ENCODE measurements at regions of chr18 and their contacts with region 1.

Region 1: DNA sequence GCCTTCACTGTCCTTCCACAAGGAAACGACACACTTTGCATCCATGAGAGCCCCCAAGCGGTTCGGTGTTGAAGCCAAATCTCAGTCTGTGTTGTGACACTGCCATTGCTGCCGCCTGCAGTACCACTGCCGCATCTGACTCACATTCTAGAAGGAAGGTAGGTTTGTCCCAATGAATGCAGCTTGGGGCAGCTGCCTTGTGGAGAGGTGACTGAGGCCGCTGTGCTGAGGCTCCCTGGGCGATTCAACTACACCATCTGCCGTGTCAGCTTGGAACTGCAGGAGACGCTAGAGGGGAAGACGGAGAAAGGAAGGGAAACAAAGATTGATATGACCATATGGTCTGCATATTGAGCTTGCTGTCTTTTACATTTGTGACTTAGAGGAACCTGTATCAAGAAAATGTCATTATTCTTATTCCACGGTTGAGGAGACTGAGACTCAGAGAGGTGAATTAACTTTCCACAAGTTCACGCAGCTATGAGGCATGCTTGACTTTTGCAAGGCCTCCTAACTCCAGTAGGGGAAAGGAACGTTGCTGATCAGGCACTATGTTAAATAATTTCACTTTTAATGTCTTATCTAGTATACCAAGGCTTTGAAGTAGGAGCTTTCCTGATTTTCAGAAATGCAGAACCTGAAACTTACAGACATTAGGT is 43.5 kb upstream of the LMAN1 start:
- DNase-seq: peak; percentile 75
- ATAC-seq: peak; percentile 99
- H3K4me3 Mint-ChIP-seq: no peak overlapping the region
- H3K27ac Mint-ChIP-seq: no peak overlapping the region
- H3K4me1 Mint-ChIP-seq: no peaks in the 10 kb centered on the region
- H3K27me3 Mint-ChIP-seq: peaks cover 7% of the 10 kb centered on the region

Region 2: GRCh38 chr18:59056706-59057492 is 345.7 kb before region 1 on chr18:
- CTCF ChIA-PET with region 1: no interaction called
- POLR2A ChIA-PET with region 1: no interaction called
- DNase-seq: peak; percentile 73
- ATAC-seq: no peak
- H3K4me3 Mint-ChIP-seq: no peak overlapping the region
- H3K27ac Mint-ChIP-seq: no peak overlapping the region
- H3K4me1 Mint-ChIP-seq: no peaks in the 10 kb centered on the region
- H3K27me3 Mint-ChIP-seq: peaks cover 6% of the 10 kb centered on the region

Region 3: GRCh38 chr18:59085797-59086196 is 316.8 kb before region 1 on chr18:
- CTCF ChIA-PET with region 1: interaction called, 13 read pairs
- POLR2A ChIA-PET with region 1: no interaction called
- DNase-seq: no peak
- ATAC-seq: no peak
- H3K4me3 Mint-ChIP-seq: no peak overlapping the region
- H3K27ac Mint-ChIP-seq: no peak overlapping the region
- H3K4me1 Mint-ChIP-seq: peaks cover 4% of the 10 kb centered on the region
- H3K27me3 Mint-ChIP-seq: peaks cover 9% of the 10 kb centered on the region

Region 4: GRCh38 chr18:59300676-59301285 is 101.8 kb before region 1 on chr18:
- CTCF ChIA-PET with region 1: interaction called, 38 read pairs
- POLR2A ChIA-PET with region 1: no interaction called
- DNase-seq: no peak
- ATAC-seq: peak; percentile 44
- H3K4me3 Mint-ChIP-seq: no peak overlapping the region
- H3K27ac Mint-ChIP-seq: no peak overlapping the region
- H3K4me1 Mint-ChIP-seq: peaks cover 7% of the 10 kb centered on the region
- H3K27me3 Mint-ChIP-seq: peaks cover 17% of the 10 kb centered on the region

Region 5: DNA sequence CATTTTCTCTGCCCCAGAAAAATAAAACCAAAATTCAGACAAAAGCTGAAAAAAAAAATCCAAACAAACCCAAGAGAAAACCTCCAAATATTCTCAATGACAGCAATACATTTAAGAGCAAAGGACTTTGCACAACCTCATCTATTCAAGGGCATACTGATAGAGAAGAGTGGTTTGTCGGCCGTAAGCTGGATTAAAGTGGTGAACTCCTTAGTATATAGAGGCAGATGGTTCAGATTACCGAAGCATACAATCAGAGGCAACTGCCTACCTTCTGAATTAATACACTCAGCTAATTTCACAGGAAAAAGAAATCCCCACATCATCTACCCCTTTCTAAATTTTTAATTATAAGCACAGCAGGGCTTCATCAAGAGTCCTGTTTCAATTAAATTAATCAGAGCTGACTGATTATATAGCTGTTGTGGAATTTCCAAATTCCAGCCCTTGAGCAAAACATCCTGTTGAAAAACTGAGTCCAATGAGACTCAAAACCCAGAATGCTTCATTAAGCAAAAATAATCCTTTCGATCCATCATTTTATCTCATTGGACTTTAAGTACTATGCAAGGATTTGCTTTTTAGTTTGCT is 84.0 kb before region 1 on chr18 and contains the start of gene CPLX4:
- CTCF ChIA-PET with region 1: interaction called, 11 read pairs
- POLR2A ChIA-PET with region 1: no interaction called
- DNase-seq: no peak
- ATAC-seq: no peak
- H3K4me3 Mint-ChIP-seq: no peak within 1 kb of the TSS
- H3K27ac Mint-ChIP-seq: no peak within 1 kb of the TSS
- H3K4me1 Mint-ChIP-seq: no peaks in the 10 kb centered on the region
- H3K27me3 Mint-ChIP-seq: peaks cover 32% of the 10 kb centered on the region
- total RNA-seq, gene CPLX4: not detected

Region 6: GRCh38 chr18:59358712-59359575 is 43.6 kb before region 1 on chr18 and contains the start of gene LMAN1:
- CTCF ChIA-PET with region 1: interaction called, 10 read pairs
- POLR2A ChIA-PET with region 1: no interaction called
- DNase-seq: peak; percentile 95
- ATAC-seq: peak; percentile 98
- H3K4me3 Mint-ChIP-seq: peak within 1 kb of the TSS; percentile 89
- H3K27ac Mint-ChIP-seq: peak within 1 kb of the TSS; percentile 93
- H3K4me1 Mint-ChIP-seq: peaks cover 34% of the 10 kb centered on the region
- H3K27me3 Mint-ChIP-seq: peaks cover 4% of the 10 kb centered on the region
- total RNA-seq, gene LMAN1: 57.2 to 59.1 TPM

Region 7: GRCh38 chr18:59387687-59388565 is 14.6 kb before region 1 on chr18:
- CTCF ChIA-PET with region 1: interaction called, 12 read pairs
- POLR2A ChIA-PET with region 1: no interaction called
- DNase-seq: no peak
- ATAC-seq: no peak
- H3K4me3 Mint-ChIP-seq: no peak overlapping the region
- H3K27ac Mint-ChIP-seq: no peak overlapping the region
- H3K4me1 Mint-ChIP-seq: no peaks in the 10 kb centered on the region
- H3K27me3 Mint-ChIP-seq: peaks cover 16% of the 10 kb centered on the region